ENCODE measurements at regions of chr19 and their contacts with region 1.

Region 1: DNA sequence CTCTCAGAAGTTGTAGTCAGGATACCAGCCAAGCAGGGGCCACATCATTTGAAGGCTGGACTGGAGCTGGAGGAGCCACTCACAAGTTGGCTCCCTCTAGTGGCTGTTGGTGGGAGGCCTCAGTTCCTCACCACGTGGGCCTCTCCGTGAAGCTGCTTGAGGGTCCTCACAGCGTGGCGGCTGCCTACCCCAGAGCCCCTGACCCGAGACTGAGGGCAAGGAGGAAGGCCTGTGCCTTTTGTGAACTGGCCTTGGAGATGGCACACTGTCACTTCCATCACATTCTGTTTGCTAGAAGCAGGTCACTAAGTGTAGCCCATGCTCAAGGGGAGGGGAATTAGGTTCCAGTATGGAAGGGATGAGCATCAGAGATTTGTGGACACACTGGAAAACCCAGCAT is 14.6 kb downstream of the GNA11 start:
- DNase-seq: peak; percentile 72
- H3K4me3 ChIP-seq: no peak overlapping the region
- H3K27ac ChIP-seq: peak overlapping the region in 1 of 4 donors; percentile 69
- H3K4me1 ChIP-seq: peaks cover 20 to 48% (median 37%) of the 10 kb centered on the region in 4 donors
- H3K27me3 ChIP-seq: no peaks in the 10 kb centered on the region
- CTCF ChIP-seq: peak; percentile 80 to 88 (median 82)
- EP300 ChIP-seq: no peak
- POLR2A ChIP-seq: no peak

Region 2: GRCh38 chr19:2962045-2962561 is 146.7 kb before region 1 on chr19:
- in situ Hi-C with region 1: loop called in 1 of 4 experiments (anchors 10 kb)
- intact Hi-C with region 1: loop called (anchors 10 kb)
- DNase-seq: peak; percentile 47
- H3K4me3 ChIP-seq: no peak overlapping the region
- H3K27ac ChIP-seq: no peak overlapping the region
- H3K4me1 ChIP-seq: peaks cover 0 to 5% (median 1%) of the 10 kb centered on the region in 4 donors
- H3K27me3 ChIP-seq: no peaks in the 10 kb centered on the region
- CTCF ChIP-seq: peak; percentile 70 to 96 (median 73)
- EP300 ChIP-seq: no peak
- POLR2A ChIP-seq: no peak

Region 3: GRCh38 chr19:3075895-3076431 is 32.8 kb before region 1 on chr19:
- in situ Hi-C with region 1: no loop called
- intact Hi-C with region 1: loop called (anchors 2 kb)
- DNase-seq: peak; percentile 75
- H3K4me3 ChIP-seq: no peak overlapping the region
- H3K27ac ChIP-seq: no peak overlapping the region
- H3K4me1 ChIP-seq: peaks cover 0 to 21% (median 14%) of the 10 kb centered on the region in 4 donors
- H3K27me3 ChIP-seq: no peaks in the 10 kb centered on the region
- CTCF ChIP-seq: peak; percentile 97 to 98 (median 98)
- EP300 ChIP-seq: no peak
- POLR2A ChIP-seq: no peak